ENCODE measurements at regions of chr17 and their contacts with region 1.

Region 1: DNA sequence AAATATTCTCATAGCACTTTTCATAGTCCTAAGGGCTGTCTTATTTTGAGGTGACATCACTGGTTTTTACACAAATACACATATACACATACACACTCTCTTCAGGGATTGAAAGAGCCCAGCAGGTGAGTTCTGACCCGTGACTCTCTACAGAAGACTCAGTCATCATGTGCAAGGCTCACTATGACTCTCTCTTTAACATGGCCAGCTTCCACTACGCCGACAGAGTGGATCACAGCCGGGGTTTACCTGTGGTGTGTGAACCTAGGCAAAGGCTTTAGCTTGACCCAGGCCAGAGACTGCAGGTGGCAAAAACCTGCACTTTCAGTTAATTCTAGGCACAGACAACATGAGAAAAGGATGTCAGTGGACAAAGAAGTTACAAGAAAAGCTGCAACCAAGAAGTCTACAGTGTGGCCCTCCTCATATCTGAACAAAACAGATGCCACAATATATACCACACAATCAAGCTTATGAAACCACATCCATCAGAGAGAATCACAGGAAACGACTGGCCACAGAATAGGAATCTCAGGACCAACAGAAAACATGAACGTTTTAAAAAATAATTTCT is 56.5 kb downstream of the CYTH1 start:
- DNase-seq: no peak

Region 2: GRCh38 chr17:78828470-78829185 is 103.1 kb after region 1 on chr17:
- in situ Hi-C with region 1: loop called (anchors 5 kb)
- DNase-seq: peak; percentile 76